Adrenal gland (tissue), 19 donors: ENCODE measurements at regions of chr11 and their contacts with region 1.

Region 1: DNA sequence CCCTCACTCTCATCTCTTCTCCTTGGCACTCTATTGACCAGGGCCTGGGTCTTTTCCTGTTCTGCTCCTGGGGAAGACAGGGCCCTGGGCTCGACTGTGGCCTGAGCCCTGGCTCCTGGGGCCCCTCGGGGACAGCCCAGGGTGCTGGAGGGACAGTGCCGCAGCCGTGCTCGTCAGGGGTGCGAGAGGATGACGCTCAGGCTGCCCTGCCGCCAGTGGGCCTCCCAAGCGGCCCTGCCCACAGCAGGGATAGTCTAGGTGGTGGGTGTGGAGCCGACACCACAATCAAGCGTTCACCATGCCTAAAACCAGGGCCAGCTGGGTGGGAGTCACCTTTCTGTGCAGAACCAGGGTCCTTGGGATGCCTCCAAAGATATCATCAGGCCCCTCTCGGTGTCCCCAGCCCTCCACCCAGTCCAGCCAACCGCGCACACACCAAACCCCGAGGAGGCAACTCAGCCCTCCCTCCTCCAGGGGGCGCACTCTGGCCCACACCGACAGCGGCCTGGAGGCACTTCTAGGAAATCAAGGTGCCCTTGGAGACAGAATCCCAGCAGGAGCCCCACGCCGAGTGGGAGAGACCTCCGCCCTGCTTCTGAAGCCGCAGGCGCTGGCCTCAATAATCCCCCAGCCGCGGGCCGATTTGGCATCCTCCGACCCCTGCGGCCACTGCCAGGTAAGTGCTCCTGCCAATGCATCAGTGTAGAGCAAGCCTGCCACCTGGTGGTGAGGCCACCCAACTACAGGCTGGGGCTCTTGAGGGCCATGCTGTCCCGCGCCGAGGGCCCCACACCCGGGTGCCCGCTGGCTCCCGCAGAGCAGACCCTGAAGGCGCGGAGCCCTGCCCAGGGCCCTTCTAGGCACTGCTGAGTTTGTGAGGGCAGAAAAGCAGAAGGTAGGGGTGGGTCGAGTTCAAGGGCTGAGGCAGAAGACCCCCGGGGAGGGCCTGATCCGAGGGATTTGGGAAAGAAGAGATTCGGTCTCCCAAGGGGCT is 496.4 kb downstream of the BUD13 start:
- DNase-seq: peak; percentile 49 to 87 (median 74)
- H3K4me3 ChIP-seq: peak overlapping the region in 1 of 4 donors; percentile 29
- H3K27ac ChIP-seq: no peak overlapping the region
- H3K4me1 ChIP-seq: peaks cover 0 to 5% of the 10 kb centered on the region in 2 donors
- H3K27me3 ChIP-seq: no peaks in the 10 kb centered on the region
- CTCF ChIP-seq: peak; percentile 65 to 98 (median 94)
- POLR2A ChIP-seq: no peak

Region 2: DNA sequence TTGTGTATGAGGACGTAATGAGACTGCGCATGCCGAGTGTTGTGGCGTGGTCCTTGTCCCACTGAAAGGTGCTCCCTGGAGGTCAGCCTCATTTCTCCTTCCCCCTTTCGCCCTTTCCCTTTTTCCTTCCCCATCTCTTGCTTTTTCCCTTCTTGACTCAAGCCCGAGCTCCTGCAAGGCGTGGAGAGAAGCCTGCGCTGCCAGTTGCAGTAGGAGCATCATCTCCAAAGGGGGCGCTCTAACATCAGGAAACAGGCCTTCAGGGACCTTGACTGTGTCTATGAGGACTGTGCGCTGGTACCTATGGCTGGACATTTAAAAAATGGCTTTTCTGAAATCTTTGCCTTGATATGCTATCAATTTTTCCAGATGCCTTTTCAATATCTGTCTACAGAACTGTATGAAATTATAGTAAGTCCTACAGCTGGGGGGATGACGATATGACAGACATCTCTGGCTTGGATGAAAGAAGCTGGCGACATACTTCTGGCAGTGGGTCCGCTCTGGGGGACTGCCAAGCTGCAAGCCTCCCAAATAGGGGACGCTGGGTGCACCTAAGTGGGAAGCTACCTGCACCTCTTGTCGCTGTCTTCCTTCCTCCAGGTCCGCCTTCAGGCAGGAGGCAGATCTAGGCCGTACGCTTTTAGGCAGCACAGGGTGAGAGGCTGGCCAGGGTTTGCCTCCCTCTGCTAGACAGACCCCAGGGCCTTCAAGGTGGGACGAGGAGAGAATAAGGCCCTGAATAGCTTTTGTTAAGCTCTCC is 1501.6 kb before region 1 on chr11:
- intact Hi-C with region 1: loop called in 1 of 2 experiments (anchors 10 kb)
- DNase-seq: peak; percentile 29 to 80 (median 60)
- H3K4me3 ChIP-seq: no peak overlapping the region
- H3K27ac ChIP-seq: no peak overlapping the region
- H3K4me1 ChIP-seq: no peaks in the 10 kb centered on the region
- H3K27me3 ChIP-seq: peaks cover 4% of the 10 kb centered on the region
- CTCF ChIP-seq: peak; percentile 58 to 84 (median 70)
- POLR2A ChIP-seq: no peak

Region 3: GRCh38 chr11:115324581-115325432 is 951.5 kb before region 1 on chr11:
- intact Hi-C with region 1: loop called (anchors 5 to 10 kb)
- DNase-seq: peak; percentile 22 to 60 (median 36)
- H3K4me3 ChIP-seq: no peak overlapping the region
- H3K27ac ChIP-seq: peak overlapping the region in 1 of 5 donors; percentile 3
- H3K4me1 ChIP-seq: peaks cover 0 to 9% of the 10 kb centered on the region in 2 donors
- H3K27me3 ChIP-seq: no peaks in the 10 kb centered on the region
- CTCF ChIP-seq: peak; percentile 56 to 84 (median 76)
- POLR2A ChIP-seq: no peak

Region 4: GRCh38 chr11:115334932-115335788 is 941.2 kb before region 1 on chr11:
- intact Hi-C with region 1: loop called in 1 of 2 experiments (anchors 10 kb)
- DNase-seq: no peak
- H3K4me3 ChIP-seq: no peak overlapping the region
- H3K27ac ChIP-seq: no peak overlapping the region
- H3K4me1 ChIP-seq: no peaks in the 10 kb centered on the region
- H3K27me3 ChIP-seq: no peaks in the 10 kb centered on the region
- CTCF ChIP-seq: peak; percentile 58 to 83 (median 70)
- POLR2A ChIP-seq: no peak

Region 5: GRCh38 chr11:115379528-115379927 is 896.8 kb before region 1 on chr11:
- intact Hi-C with region 1: no loop called
- DNase-seq: no peak
- H3K4me3 ChIP-seq: no peak overlapping the region
- H3K27ac ChIP-seq: no peak overlapping the region
- H3K4me1 ChIP-seq: no peaks in the 10 kb centered on the region
- H3K27me3 ChIP-seq: no peaks in the 10 kb centered on the region
- CTCF ChIP-seq: peak in 1 of 6 experiments; percentile 22
- POLR2A ChIP-seq: no peak

Region 6: GRCh38 chr11:116148056-116148455 is 128.3 kb before region 1 on chr11:
- intact Hi-C with region 1: no loop called
- DNase-seq: no peak
- H3K4me3 ChIP-seq: no peak overlapping the region
- H3K27ac ChIP-seq: no peak overlapping the region
- H3K4me1 ChIP-seq: no peaks in the 10 kb centered on the region
- H3K27me3 ChIP-seq: peaks cover 6% of the 10 kb centered on the region
- CTCF ChIP-seq: no peak
- POLR2A ChIP-seq: no peak

Region 7: GRCh38 chr11:116641561-116642045 is 365.3 kb after region 1 on chr11:
- intact Hi-C with region 1: no loop called
- DNase-seq: peak; percentile 27 to 75 (median 47)
- H3K4me3 ChIP-seq: no peak overlapping the region
- H3K27ac ChIP-seq: no peak overlapping the region
- H3K4me1 ChIP-seq: no peaks in the 10 kb centered on the region
- H3K27me3 ChIP-seq: no peaks in the 10 kb centered on the region
- CTCF ChIP-seq: peak; percentile 40 to 74 (median 64)
- POLR2A ChIP-seq: no peak